Tibial artery (tissue), 4 donors: ENCODE measurements at regions of chr20 and their contacts with region 1.

Region 1: GRCh38 chr20:49397525-49397924 is 84.9 kb downstream of the KCNB1 start:
- DNase-seq: peak in 1 of 2 donors; percentile 59
- H3K4me3 ChIP-seq: no peak overlapping the region
- H3K27ac ChIP-seq: peak overlapping the region; percentile 49 to 79
- H3K4me1 ChIP-seq: peaks cover 0 to 63% (median 36%) of the 10 kb centered on the region in 4 donors
- H3K27me3 ChIP-seq: no peaks in the 10 kb centered on the region
- CTCF ChIP-seq: no peak

Region 2: DNA sequence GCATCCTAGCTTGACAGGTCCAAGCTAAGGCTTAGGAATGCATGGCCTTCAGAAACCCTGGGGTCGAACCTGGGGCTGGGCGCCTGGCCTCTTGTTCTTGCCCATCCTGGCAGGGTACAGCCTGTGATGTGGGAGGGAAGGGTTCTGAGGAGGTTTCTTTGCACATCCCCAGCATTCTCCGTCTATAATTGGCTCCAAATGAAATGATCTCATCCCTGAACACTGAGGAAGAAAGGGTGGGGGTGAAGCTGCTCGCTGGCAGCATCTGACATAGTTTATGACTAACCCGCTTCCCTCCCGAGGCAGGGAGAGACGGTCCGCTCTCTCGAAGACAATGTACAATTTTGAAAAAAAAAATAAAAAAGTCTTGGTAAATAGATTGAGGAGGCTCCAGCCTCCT is 52.5 kb before region 1 on chr20:
- intact Hi-C with region 1: loop called (anchors 10 kb)
- DNase-seq: peak; percentile 78 to 86
- H3K4me3 ChIP-seq: no peak overlapping the region
- H3K27ac ChIP-seq: peak overlapping the region; percentile 58 to 59
- H3K4me1 ChIP-seq: peaks cover 0 to 28% (median 17%) of the 10 kb centered on the region in 4 donors
- H3K27me3 ChIP-seq: no peaks in the 10 kb centered on the region
- CTCF ChIP-seq: no peak

Region 3: DNA sequence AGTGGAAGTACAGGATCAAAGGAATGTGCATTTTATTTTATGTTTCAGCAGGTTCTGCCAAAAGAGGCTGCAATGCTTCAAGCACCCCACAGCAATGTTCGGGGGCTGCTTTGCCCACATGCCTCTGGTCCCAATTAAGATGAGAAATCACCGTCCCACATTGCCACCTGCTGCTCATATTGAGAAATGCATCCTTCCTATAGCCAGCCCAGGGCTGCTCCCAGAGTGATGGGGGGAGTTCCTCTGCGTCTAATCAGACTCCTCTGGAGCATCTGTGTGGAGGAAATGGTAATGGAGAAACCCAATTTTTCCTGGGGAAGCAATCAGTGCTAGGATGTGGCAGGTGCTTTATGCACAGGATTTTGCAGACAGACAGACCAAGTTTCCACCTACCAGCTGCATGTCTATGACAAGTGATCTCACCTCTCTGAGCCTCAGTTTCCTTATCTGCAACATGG is 136.8 kb after region 1 on chr20:
- intact Hi-C with region 1: no loop called
- DNase-seq: no peak
- H3K4me3 ChIP-seq: no peak overlapping the region
- H3K27ac ChIP-seq: peak overlapping the region; percentile 9 to 13
- H3K4me1 ChIP-seq: peaks cover 0 to 41% (median 7%) of the 10 kb centered on the region in 4 donors
- H3K27me3 ChIP-seq: no peaks in the 10 kb centered on the region
- CTCF ChIP-seq: peak; percentile 82 to 86